Psoas muscle (tissue), 8 donors: ENCODE measurements at regions of chr16 and their contacts with region 1.

Region 1: GRCh38 chr16:17277977-17278381 is 192.8 kb downstream of the XYLT1 start:
- DNase-seq: peak in 1 of 2 donors; percentile 58
- ATAC-seq: peak in 3 of 4 donors; percentile 52 to 80 (median 72)
- H3K4me3 ChIP-seq: no peak overlapping the region
- H3K27ac ChIP-seq: no peak overlapping the region
- H3K4me1 ChIP-seq: no peaks in the 10 kb centered on the region
- H3K27me3 ChIP-seq: no peaks in the 10 kb centered on the region
- CTCF ChIP-seq: peak; percentile 45

Region 2: GRCh38 chr16:17224879-17225281 is 53.1 kb before region 1 on chr16:
- intact Hi-C with region 1: loop called in 1 of 2 experiments (anchors 5 kb)
- DNase-seq: peak; percentile 49 to 72
- ATAC-seq: peak; percentile 93 to 98 (median 97)
- H3K4me3 ChIP-seq: no peak overlapping the region
- H3K27ac ChIP-seq: peak overlapping the region; percentile 59
- H3K4me1 ChIP-seq: peaks cover 27% of the 10 kb centered on the region
- H3K27me3 ChIP-seq: no peaks in the 10 kb centered on the region
- CTCF ChIP-seq: no peak